Common myeloid progenitor, CD34-positive (primary cell): ENCODE measurements at regions of chr21 and their contacts with region 1.

Region 1: GRCh38 chr21:42107881-42108553 is 36.9 kb downstream of the UMODL1 start:
- DNase-seq: peak; percentile 57 to 84 (median 77)
- H3K4me3 ChIP-seq: peak overlapping the region in 5 of 7 experiments; percentile 0 to 66 (median 52)
- H3K27ac ChIP-seq: peak overlapping the region in 1 of 2 experiments; percentile 47
- H3K4me1 ChIP-seq: peaks cover 1 to 53% (median 50%) of the 10 kb centered on the region in 4 experiments
- H3K27me3 ChIP-seq: no peaks in the 10 kb centered on the region

Region 2: GRCh38 chr21:41907536-41908258 is 200.3 kb before region 1 on chr21:
- CTCF ChIA-PET with region 1: no interaction called
- POLR2A ChIA-PET with region 1: no interaction called
- DNase-seq: no peak
- H3K4me3 ChIP-seq: no peak overlapping the region
- H3K27ac ChIP-seq: no peak overlapping the region
- H3K4me1 ChIP-seq: no peaks in the 10 kb centered on the region
- H3K27me3 ChIP-seq: no peaks in the 10 kb centered on the region

Region 3: DNA sequence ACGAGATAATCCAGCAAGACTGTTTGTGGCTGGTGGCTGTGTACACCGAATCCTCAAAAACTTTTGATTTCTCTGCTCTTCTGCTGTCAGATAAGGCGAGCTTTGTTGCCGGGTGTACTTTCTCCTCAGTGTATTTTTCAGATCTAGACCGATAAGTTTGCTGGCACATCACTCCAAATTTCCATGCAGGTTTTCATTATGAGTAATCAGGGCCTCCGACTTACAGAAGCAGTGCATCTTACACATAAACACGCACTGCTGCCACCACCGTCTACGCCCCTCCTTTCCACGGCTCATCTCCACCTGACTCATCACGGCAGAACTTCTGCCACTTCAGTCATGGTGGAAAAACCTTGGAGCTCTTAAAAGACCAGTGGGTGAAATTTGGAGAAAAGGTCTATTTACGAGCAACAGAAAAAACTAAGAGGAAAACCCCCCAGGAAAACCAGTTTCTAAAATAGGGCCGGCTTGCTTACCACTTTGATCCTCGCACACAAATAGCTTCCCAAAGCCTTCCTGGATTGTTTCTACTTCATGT is 105.5 kb before region 1 on chr21:
- CTCF ChIA-PET with region 1: interaction called, 38 read pairs
- POLR2A ChIA-PET with region 1: no interaction called
- DNase-seq: no peak
- H3K4me3 ChIP-seq: no peak overlapping the region
- H3K27ac ChIP-seq: no peak overlapping the region
- H3K4me1 ChIP-seq: peaks cover 0 to 5% (median 0%) of the 10 kb centered on the region in 4 experiments
- H3K27me3 ChIP-seq: no peaks in the 10 kb centered on the region

Region 4: GRCh38 chr21:42080788-42081083 is 27.3 kb before region 1 on chr21:
- CTCF ChIA-PET with region 1: interaction called, 21 read pairs
- POLR2A ChIA-PET with region 1: interaction called, 6 read pairs
- DNase-seq: peak in 2 of 3 donors; percentile 22 to 40
- H3K4me3 ChIP-seq: no peak overlapping the region
- H3K27ac ChIP-seq: no peak overlapping the region
- H3K4me1 ChIP-seq: peaks cover 0 to 24% (median 23%) of the 10 kb centered on the region in 4 experiments
- H3K27me3 ChIP-seq: no peaks in the 10 kb centered on the region

Region 5: DNA sequence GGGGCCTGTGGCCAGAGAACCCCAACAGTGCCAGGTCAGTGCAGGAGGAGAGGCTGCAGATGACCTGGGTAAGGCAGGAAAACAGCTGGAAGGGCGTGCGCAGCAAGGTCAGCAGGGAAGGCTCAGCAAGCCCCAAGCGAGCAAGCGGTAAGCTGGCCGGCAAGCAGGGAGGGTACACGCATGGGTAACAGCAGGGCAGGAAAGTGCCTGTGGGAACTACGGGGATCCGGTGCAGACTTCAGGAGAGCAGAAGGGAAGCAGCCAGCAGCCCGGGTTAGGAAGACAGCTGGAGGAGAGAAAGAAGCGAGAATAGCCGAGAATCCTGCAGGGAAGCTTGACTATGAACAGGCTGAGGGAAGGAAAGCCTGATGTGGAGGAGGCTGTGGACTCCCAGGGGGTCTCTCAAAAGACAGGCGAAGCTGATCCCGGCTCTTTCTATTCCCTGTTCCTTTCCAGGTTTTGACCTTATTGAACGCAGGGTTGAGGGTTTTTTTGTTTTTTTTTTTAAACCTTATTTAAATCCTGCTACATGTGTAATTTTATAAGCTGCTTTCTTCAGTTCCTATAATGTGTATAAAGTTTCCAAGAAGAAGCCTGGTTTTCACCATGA is 16.0 kb before region 1 on chr21:
- CTCF ChIA-PET with region 1: interaction called, 28 read pairs
- POLR2A ChIA-PET with region 1: no interaction called
- DNase-seq: no peak
- H3K4me3 ChIP-seq: no peak overlapping the region
- H3K27ac ChIP-seq: no peak overlapping the region
- H3K4me1 ChIP-seq: peaks cover 0 to 15% (median 4%) of the 10 kb centered on the region in 4 experiments
- H3K27me3 ChIP-seq: no peaks in the 10 kb centered on the region

Region 6: GRCh38 chr21:42125571-42126544 is 17.8 kb after region 1 on chr21:
- CTCF ChIA-PET with region 1: interaction called, 14 read pairs
- POLR2A ChIA-PET with region 1: interaction called, 3 read pairs
- DNase-seq: peak; percentile 57 to 84 (median 78)
- H3K4me3 ChIP-seq: peak overlapping the region in 2 of 7 experiments; percentile 6 to 24
- H3K27ac ChIP-seq: peak overlapping the region in 1 of 2 experiments; percentile 59
- H3K4me1 ChIP-seq: peaks cover 13 to 81% (median 73%) of the 10 kb centered on the region in 4 experiments
- H3K27me3 ChIP-seq: no peaks in the 10 kb centered on the region

Region 7: DNA sequence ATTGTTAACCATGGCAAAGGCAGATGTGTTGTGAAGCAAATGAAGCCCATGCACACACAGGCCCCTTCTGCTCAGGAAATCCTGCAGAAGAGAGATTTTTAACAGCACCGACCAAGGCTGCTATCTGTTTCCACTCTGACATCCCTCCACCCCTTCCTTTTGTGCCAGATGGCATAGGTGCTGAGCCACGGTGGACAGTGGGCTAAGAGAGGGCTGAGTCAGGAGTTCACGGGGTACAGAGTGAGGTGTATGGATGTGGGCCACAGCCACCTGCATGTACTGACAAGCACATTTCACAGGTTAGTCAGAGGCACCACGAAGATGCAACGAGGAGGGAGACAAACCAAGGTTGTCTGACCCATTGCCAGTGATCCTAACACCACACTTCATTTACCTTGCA is 378.5 kb after region 1 on chr21:
- CTCF ChIA-PET with region 1: no interaction called
- POLR2A ChIA-PET with region 1: no interaction called
- DNase-seq: peak; percentile 63 to 98 (median 96)
- H3K4me3 ChIP-seq: no peak overlapping the region
- H3K27ac ChIP-seq: peak overlapping the region; percentile 1 to 56
- H3K4me1 ChIP-seq: peaks cover 14 to 67% (median 35%) of the 10 kb centered on the region in 4 experiments
- H3K27me3 ChIP-seq: no peaks in the 10 kb centered on the region